ENCODE measurements at regions of chr13 and their contacts with region 1.

Region 1: GRCh38 chr13:33610471-33611015 is 207.4 kb upstream of the RFC3 start:
- DNase-seq: peak; percentile 77
- ATAC-seq: peak; percentile 54
- H3K4me3 Mint-ChIP-seq: peak overlapping the region; percentile 69
- H3K27ac Mint-ChIP-seq: peak overlapping the region; percentile 98
- H3K4me1 Mint-ChIP-seq: peaks cover 50% of the 10 kb centered on the region
- H3K27me3 Mint-ChIP-seq: peaks cover 2% of the 10 kb centered on the region

Region 2: GRCh38 chr13:33146843-33147611 is 463.5 kb before region 1 on chr13:
- CTCF ChIA-PET with region 1: no interaction called
- POLR2A ChIA-PET with region 1: no interaction called
- intact Hi-C with region 1: loop called in 1 of 2 experiments (anchors 5 kb)
- DNase-seq: peak; percentile 24
- ATAC-seq: peak; percentile 80
- H3K4me3 Mint-ChIP-seq: no peak overlapping the region
- H3K27ac Mint-ChIP-seq: no peak overlapping the region
- H3K4me1 Mint-ChIP-seq: peaks cover 21% of the 10 kb centered on the region
- H3K27me3 Mint-ChIP-seq: peaks cover 32% of the 10 kb centered on the region

Region 3: DNA sequence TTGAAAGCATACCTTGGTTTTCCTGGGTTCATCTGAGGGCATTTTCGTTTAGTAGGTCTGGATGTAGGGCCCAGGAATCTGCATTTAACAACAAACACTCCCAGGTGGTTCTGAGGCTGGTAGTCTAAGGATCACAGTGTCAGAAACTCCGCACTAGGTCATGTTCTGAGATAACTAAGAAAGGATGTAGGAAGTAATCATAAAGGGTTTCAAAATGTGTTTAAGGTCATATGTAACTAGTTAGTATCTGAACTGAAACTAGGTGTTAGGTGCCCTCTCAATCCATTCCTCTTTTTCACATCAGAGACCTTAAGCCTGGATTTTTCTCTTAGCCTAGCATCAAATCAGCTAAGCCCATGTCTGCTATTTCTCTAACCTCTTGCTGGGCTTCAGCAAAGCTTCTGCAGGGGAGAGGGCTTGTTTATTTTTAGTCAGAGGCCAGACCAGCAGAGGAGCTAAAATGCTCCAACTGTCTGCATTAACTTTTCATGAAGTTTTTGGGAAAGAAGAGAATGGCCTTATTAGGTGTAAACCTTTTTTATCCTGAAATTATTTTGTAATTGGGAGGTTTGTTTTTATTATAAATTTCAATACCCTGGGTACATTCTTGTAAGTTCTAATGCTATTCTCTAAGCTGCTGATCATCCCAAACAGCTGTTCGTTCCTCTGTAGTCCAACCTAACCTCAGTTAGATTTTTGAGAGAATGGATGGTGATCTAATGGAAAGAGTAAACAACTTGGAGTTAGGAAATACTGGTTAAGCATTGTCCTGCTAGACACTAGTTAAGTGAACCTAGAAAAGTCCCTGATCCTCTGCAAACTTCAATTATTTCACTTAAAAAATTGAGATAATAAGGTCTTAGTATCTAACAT is 55.4 kb before region 1 on chr13:
- CTCF ChIA-PET with region 1: no interaction called
- POLR2A ChIA-PET with region 1: no interaction called
- intact Hi-C with region 1: loop called (anchors 2 kb)
- DNase-seq: no peak
- ATAC-seq: peak; percentile 88
- H3K4me3 Mint-ChIP-seq: no peak overlapping the region
- H3K27ac Mint-ChIP-seq: peak overlapping the region; percentile 34
- H3K4me1 Mint-ChIP-seq: peaks cover 19% of the 10 kb centered on the region
- H3K27me3 Mint-ChIP-seq: no peaks in the 10 kb centered on the region

Region 4: DNA sequence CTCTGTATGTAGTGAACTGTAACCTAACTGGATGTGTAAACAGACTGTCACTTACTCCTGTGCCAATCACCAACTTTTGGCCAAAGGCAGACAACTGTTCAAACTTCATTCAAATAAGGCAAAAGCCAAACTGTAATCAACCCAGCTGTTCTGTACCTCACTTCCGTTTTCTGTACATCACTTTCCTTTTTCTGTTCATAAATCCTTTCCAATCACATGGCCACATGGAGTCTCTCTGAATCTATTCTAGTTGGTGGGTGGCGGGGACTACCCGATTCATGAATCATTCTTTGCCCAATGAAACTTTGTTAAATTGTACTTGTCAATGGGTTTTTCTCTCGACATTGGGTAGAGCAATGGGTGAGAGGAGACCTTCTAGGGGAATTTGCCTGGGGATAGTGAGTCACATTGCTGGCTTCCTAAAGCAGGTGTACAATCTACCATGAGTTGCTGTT is 29.1 kb after region 1 on chr13:
- CTCF ChIA-PET with region 1: interaction called, 3 read pairs
- POLR2A ChIA-PET with region 1: no interaction called
- intact Hi-C with region 1: loop called (anchors 1 kb)
- DNase-seq: peak; percentile 79
- ATAC-seq: peak; percentile 89
- H3K4me3 Mint-ChIP-seq: no peak overlapping the region
- H3K27ac Mint-ChIP-seq: peak overlapping the region; percentile 88
- H3K4me1 Mint-ChIP-seq: peaks cover 50% of the 10 kb centered on the region
- H3K27me3 Mint-ChIP-seq: peaks cover under 1% of the 10 kb centered on the region

Region 5: GRCh38 chr13:33678906-33679657 is 68.5 kb after region 1 on chr13:
- CTCF ChIA-PET with region 1: interaction called, 3 read pairs
- POLR2A ChIA-PET with region 1: interaction called, 7 read pairs
- intact Hi-C with region 1: loop called (anchors 1 kb)
- DNase-seq: peak; percentile 91
- ATAC-seq: peak; percentile 90
- H3K4me3 Mint-ChIP-seq: peak overlapping the region; percentile 64
- H3K27ac Mint-ChIP-seq: peak overlapping the region; percentile 89
- H3K4me1 Mint-ChIP-seq: peaks cover 37% of the 10 kb centered on the region
- H3K27me3 Mint-ChIP-seq: no peaks in the 10 kb centered on the region

Region 6: GRCh38 chr13:33787051-33787591 is 176.6 kb after region 1 on chr13:
- CTCF ChIA-PET with region 1: no interaction called
- POLR2A ChIA-PET with region 1: no interaction called
- intact Hi-C with region 1: no loop called
- DNase-seq: peak; percentile 18
- ATAC-seq: peak; percentile 69
- H3K4me3 Mint-ChIP-seq: peak overlapping the region; percentile 59
- H3K27ac Mint-ChIP-seq: peak overlapping the region; percentile 60
- H3K4me1 Mint-ChIP-seq: peaks cover 16% of the 10 kb centered on the region
- H3K27me3 Mint-ChIP-seq: peaks cover 2% of the 10 kb centered on the region

Region 7: GRCh38 chr13:33817901-33818706 is 207.6 kb after region 1 on chr13 and contains the start of gene RFC3:
- CTCF ChIA-PET with region 1: no interaction called
- POLR2A ChIA-PET with region 1: no interaction called
- intact Hi-C with region 1: loop called (anchors 2 to 5 kb)
- DNase-seq: peak; percentile 96
- ATAC-seq: peak; percentile 97
- H3K4me3 Mint-ChIP-seq: peak within 1 kb of the TSS; percentile 96
- H3K27ac Mint-ChIP-seq: peak within 1 kb of the TSS; percentile 97
- H3K4me1 Mint-ChIP-seq: peaks cover 29% of the 10 kb centered on the region
- H3K27me3 Mint-ChIP-seq: no peaks in the 10 kb centered on the region
- total RNA-seq, gene RFC3: 64.6 to 66.4 TPM

Region 8: DNA sequence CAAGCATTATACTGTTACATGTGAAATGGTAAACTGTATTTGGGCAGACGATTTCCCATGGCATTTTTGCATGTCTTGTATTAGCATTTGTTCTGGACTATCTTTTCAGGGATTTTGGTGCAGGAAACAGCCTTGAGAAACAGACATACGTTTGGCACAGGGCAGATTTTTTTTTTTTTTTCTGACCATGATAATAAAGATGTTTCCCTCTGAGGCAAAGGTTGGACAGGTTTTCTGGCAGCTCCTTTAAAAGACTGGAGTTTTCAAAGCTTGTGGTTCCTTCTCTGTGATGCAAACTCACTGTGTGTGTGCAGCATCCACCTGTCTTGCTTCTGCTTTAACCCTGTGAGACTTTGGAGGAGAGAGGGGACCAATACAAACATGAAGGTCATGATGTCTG is 1394.5 kb after region 1 on chr13:
- CTCF ChIA-PET with region 1: no interaction called
- POLR2A ChIA-PET with region 1: no interaction called
- intact Hi-C with region 1: no loop called
- DNase-seq: no peak
- ATAC-seq: no peak
- H3K4me3 Mint-ChIP-seq: no peak overlapping the region
- H3K27ac Mint-ChIP-seq: no peak overlapping the region
- H3K4me1 Mint-ChIP-seq: no peaks in the 10 kb centered on the region
- H3K27me3 Mint-ChIP-seq: no peaks in the 10 kb centered on the region